A549 (cell line): ENCODE measurements at regions of chr3 and their contacts with region 1.

Region 1: DNA sequence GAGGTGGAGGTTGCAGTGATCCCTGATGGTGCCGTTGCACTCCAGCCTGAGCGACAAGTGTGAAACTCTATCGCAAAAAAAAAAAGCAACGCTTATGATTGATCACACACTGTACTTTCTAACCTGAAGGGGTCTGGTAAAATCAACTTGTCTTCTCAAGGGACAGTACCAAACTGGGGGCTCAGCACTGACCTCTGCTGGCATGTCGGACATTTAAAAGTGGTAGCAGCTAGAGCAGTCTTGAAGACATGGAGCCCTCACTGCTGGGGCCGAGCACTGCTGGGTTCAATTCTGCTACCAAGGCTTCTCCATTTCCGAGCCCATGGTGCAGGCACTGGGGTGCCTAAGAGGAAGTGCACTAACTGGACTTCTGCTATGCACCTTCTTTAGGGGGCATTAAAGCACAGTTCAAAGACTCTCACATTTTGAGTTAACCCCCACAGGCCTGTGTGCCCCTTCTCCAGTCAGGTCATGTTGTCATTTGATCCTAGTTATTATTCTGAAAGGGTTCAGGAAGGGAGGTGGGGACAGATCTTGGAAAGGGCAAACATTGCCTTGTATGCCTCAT is 26.4 kb upstream of the LAMP3 start:
- DNase-seq: peak; percentile 14 to 29
- ATAC-seq: peak; percentile 59 to 85; a peak in 4 of 6 replicates
- H3K4me3 ChIP-seq: no peak overlapping the region
- H3K27ac ChIP-seq: no peak overlapping the region
- H3K4me1 ChIP-seq: no peaks in the 10 kb centered on the region
- CTCF ChIP-seq: peak; percentile 11; the same call in 1 of the 3 replicates
- EP300 ChIP-seq: no peak
- POLR2A ChIP-seq: no peak
- RAD21 ChIP-seq: peak in 1 of 2 experiments; percentile 8; a peak in 1 of 5 replicates

Region 2: GRCh38 chr3:183213415-183214276 is 24.7 kb after region 1 on chr3:
- CTCF ChIA-PET with region 1: interaction called, 12 read pairs
- POLR2A ChIA-PET with region 1: no interaction called
- DNase-seq: no peak
- ATAC-seq: no peak
- H3K4me3 ChIP-seq: no peak overlapping the region
- H3K27ac ChIP-seq: no peak overlapping the region
- H3K4me1 ChIP-seq: no peaks in the 10 kb centered on the region
- CTCF ChIP-seq: no peak
- EP300 ChIP-seq: no peak
- POLR2A ChIP-seq: no peak
- RAD21 ChIP-seq: no peak

Region 3: GRCh38 chr3:183239046-183239445 is 50.1 kb after region 1 on chr3:
- CTCF ChIA-PET with region 1: interaction called, 12 read pairs
- POLR2A ChIA-PET with region 1: no interaction called
- DNase-seq: no peak
- ATAC-seq: no peak
- H3K4me3 ChIP-seq: no peak overlapping the region
- H3K27ac ChIP-seq: no peak overlapping the region
- H3K4me1 ChIP-seq: no peaks in the 10 kb centered on the region
- CTCF ChIP-seq: no peak
- EP300 ChIP-seq: no peak
- POLR2A ChIP-seq: no peak
- RAD21 ChIP-seq: no peak

Region 4: GRCh38 chr3:183374761-183375160 is 185.8 kb after region 1 on chr3:
- CTCF ChIA-PET with region 1: interaction called, 380 read pairs
- POLR2A ChIA-PET with region 1: no interaction called
- DNase-seq: no peak
- ATAC-seq: no peak
- H3K4me3 ChIP-seq: no peak overlapping the region
- H3K27ac ChIP-seq: peak overlapping the region in 1 of 2 experiments; percentile 12; a peak in 1 of 6 replicates
- H3K4me1 ChIP-seq: peaks cover 28% of the 10 kb centered on the region
- CTCF ChIP-seq: no peak
- EP300 ChIP-seq: no peak
- POLR2A ChIP-seq: no peak
- RAD21 ChIP-seq: no peak

Region 5: DNA sequence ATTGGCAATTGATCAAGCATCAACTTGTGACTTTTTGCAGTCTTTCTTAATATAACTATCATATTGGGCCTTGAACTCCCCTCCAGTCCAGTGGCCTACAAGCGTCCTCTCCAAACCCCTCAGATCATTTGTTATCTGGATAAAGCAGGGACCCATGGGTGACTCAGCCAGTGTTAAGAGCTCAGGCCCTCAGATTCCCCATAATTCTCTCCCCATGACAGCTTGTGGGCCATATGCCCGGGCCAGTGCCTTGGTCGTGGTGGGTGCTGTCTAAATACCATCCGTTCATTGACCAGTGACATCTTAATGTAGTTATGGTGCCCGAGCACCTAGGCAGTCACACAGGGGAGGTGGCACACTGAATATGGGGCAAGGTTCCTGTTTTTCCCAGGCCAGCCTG is 221.3 kb after region 1 on chr3:
- CTCF ChIA-PET with region 1: interaction called, 14 read pairs
- POLR2A ChIA-PET with region 1: no interaction called
- DNase-seq: no peak
- ATAC-seq: no peak
- H3K4me3 ChIP-seq: no peak overlapping the region
- H3K27ac ChIP-seq: no peak overlapping the region
- H3K4me1 ChIP-seq: no peaks in the 10 kb centered on the region
- CTCF ChIP-seq: no peak
- EP300 ChIP-seq: no peak
- POLR2A ChIP-seq: no peak
- RAD21 ChIP-seq: no peak